Posterior vena cava (tissue), 2 donors: ENCODE measurements at regions of chr2 and their contacts with region 1.

Region 1: DNA sequence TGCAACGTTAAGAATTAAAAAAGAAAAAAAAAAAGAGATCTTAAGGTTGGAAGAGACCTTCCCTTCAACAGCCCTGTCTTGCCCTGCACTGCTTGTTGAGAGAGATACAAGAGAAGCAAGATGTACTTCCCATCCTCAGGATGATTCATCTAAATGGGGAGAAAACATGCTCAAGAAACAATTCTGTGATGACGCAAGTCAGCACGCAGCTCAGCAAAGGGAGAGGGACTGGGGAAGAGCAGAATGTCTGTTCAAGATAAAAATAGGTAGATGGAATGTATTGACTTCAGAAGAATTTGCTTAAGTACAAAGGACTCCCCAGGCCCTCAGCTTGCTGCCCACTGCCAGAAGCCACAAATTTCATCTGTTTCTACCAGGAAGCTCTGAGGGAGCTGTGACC is 198.2 kb upstream of the SPRED2 start:
- DNase-seq: no peak

Region 2: DNA sequence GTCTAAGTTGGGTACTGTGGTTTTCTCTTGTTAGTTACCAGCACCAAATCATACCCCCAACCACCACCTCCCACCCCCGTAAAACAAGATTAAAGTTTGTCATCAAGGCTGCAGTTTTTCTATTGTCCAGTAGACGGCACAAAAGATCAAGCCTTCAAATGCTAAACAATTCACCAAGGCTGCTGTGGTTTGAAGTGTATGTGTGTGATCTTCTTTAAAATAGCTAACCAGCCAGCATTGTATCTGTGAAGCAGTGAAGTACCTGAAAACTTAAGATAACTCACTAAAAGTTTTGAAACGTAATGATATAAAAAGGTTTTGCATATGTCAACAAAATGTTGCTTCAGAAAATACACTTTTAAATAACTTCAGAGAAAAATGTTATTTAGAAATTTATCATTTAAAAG is 798.4 kb after region 1 on chr2:
- intact Hi-C with region 1: loop called in 1 of 2 experiments (anchors 10 kb)
- DNase-seq: no peak